ENCODE measurements at regions of chr3 and their contacts with region 1.

Region 1: GRCh38 chr3:71087143-71088018 is 496.1 kb downstream of the FOXP1 start:
- DNase-seq: peak; percentile 83
- ATAC-seq: peak; percentile 62
- H3K4me3 ChIP-seq: peak overlapping the region in 2 of 3 experiments; percentile 10 to 11; a peak in 1 of 6 replicates
- H3K27ac ChIP-seq: peak overlapping the region; percentile 65
- H3K4me1 ChIP-seq: peaks cover 71% of the 10 kb centered on the region
- H3K27me3 ChIP-seq: no peaks in the 10 kb centered on the region
- CTCF ChIP-seq: no peak
- EP300 ChIP-seq: peak in 1 of 2 experiments; percentile 80; a peak in 2 of 4 replicates
- POLR2A ChIP-seq: no peak
- RAD21 ChIP-seq: no peak

Region 2: DNA sequence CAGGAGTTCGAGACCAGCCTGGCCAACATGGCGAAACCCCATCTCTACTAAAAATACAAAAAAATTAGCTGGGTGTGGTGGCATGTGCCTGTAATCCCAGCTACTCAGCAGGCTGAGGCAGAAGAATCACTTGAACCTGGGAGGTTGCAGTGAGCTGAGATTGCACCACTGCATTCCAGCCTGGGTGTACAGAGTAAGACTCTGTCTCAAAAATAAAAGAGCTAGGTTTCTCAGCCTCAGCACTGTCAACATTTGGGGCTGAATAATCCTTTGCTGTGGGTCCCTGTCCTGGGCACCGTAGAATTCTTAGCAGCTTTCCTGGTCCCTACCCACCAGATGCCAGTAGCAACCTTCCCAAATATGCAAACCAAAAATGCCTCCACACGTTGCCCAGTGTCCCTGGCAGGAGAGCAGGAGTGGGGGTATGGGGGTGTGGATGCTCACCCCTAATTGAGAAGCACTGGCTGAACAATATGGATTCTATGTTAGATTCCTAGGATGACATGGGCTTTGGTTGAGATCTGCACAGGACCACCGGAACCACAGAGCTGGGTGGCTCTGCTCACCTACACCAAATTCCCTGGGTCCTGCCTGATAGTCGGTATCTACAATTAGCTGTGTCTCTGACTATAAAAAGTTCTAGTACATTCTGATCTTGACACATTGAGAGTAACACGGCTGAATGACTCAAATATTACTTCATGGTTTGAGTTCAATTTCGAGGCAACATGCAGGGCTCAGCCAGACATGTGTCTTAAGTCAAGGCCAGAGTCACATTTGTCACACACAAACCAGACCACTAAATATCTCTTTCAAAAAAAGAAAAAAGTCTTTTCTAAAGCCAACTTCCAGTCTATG is 198.0 kb before region 1 on chr3:
- CTCF ChIA-PET with region 1: no interaction called
- POLR2A ChIA-PET with region 1: no interaction called
- in situ Hi-C with region 1: no loop called
- intact Hi-C with region 1: no loop called
- DNase-seq: no peak
- ATAC-seq: no peak
- H3K4me3 ChIP-seq: no peak overlapping the region
- H3K27ac ChIP-seq: no peak overlapping the region
- H3K4me1 ChIP-seq: no peaks in the 10 kb centered on the region
- H3K27me3 ChIP-seq: no peaks in the 10 kb centered on the region
- CTCF ChIP-seq: no peak
- EP300 ChIP-seq: no peak
- POLR2A ChIP-seq: no peak
- RAD21 ChIP-seq: no peak

Region 3: GRCh38 chr3:71050538-71051258 is 36.7 kb before region 1 on chr3:
- CTCF ChIA-PET with region 1: no interaction called
- POLR2A ChIA-PET with region 1: interaction called, 4 read pairs
- in situ Hi-C with region 1: no loop called
- intact Hi-C with region 1: loop called (anchors 2 kb)
- DNase-seq: peak; percentile 61
- ATAC-seq: peak; percentile 8; the same call in 1 of the 3 replicates
- H3K4me3 ChIP-seq: no peak overlapping the region
- H3K27ac ChIP-seq: peak overlapping the region; percentile 65
- H3K4me1 ChIP-seq: peaks cover 73% of the 10 kb centered on the region
- H3K27me3 ChIP-seq: no peaks in the 10 kb centered on the region
- CTCF ChIP-seq: no peak
- EP300 ChIP-seq: peak in 1 of 2 experiments; percentile 30; a peak in 1 of 4 replicates
- POLR2A ChIP-seq: no peak
- RAD21 ChIP-seq: no peak

Region 4: DNA sequence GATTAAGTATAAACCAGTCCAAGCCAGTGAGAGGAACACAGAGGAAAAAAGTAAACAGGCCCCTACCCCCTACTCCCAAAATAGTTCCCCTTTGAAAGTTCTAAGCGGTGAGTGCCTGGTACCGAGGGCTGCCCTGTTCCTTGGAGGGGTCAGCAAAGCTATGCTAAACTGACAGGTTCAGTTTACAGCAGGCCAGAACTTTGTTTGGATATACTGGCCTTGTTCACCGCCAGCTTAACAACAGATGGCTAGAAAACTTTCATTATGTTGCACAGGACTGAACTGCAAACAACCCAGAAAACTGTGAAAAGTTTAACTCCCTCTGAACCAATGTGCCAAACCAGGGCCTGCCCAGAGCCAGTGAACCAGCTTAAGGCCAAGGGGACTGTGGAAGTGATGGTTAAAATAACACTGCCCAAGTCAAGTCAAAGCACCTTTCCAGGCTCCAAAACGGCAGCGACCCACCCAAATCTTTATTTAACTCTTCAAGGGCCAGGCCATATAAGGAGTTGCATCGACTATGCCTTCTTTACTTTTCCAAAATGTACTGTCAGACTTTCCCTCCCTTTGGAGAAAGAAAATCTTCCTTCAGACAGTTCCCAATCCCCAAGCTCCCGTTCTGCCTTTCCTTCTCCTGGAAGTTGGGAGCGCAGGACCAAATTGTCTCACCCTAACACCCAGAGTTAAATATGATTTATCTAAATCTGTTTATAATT is 48.1 kb after region 1 on chr3:
- CTCF ChIA-PET with region 1: no interaction called
- POLR2A ChIA-PET with region 1: interaction called, 3 read pairs
- in situ Hi-C with region 1: no loop called
- intact Hi-C with region 1: loop called (anchors 1 kb)
- DNase-seq: peak; percentile 49
- ATAC-seq: peak; percentile 93
- H3K4me3 ChIP-seq: no peak overlapping the region
- H3K27ac ChIP-seq: peak overlapping the region; percentile 57
- H3K4me1 ChIP-seq: peaks cover 62% of the 10 kb centered on the region
- H3K27me3 ChIP-seq: no peaks in the 10 kb centered on the region
- CTCF ChIP-seq: no peak
- EP300 ChIP-seq: 0 out of 4 replicates have a peak, but pooled peaks of 1 of the 2 experiments have one; percentile 44
- POLR2A ChIP-seq: no peak
- RAD21 ChIP-seq: no peak